Pancreas (tissue), 10 donors: ENCODE measurements at regions of chr1 and their contacts with region 1.

Region 1: GRCh38 chr1:240031009-240031408 is 60.7 kb upstream of the FMN2 start:
- DNase-seq: no peak
- ATAC-seq: no peak
- H3K4me3 ChIP-seq: no peak overlapping the region
- H3K27ac ChIP-seq: no peak overlapping the region
- H3K4me1 ChIP-seq: no peaks in the 10 kb centered on the region
- H3K27me3 ChIP-seq: no peaks in the 10 kb centered on the region
- CTCF ChIP-seq: no peak

Region 2: DNA sequence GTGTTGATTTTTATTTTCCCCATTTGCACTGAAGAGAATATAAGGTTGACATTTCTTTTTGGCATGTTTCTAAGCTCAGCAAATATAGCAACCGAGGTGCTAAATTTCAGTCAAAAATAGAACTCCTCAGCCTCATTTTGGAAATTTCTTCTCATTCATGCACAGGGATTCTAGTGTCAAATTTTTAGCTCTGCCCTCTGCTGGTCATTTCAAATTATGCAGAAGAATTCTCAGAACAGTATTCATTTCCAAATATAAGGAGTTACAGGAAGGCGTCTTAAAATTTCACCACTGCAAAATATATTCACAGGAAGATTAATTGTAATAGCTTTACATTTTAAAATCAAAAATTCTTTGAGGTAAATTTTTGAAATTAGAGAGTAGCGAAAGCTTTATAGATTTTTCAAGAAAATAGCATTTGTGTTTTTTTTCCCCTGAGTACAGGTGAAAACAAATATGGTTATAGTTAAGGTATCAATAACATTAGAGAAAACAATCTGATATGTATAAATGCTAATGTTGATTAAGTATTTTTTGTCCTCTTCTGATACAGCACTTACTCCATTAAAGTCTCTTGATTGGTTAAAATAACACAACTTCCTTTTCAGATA is 118.6 kb after region 1 on chr1:
- intact Hi-C with region 1: loop called in 1 of 3 experiments (anchors 10 kb)
- DNase-seq: no peak
- ATAC-seq: peak in 3 of 4 donors; percentile 39 to 70 (median 66)
- H3K4me3 ChIP-seq: no peak overlapping the region
- H3K27ac ChIP-seq: no peak overlapping the region
- H3K4me1 ChIP-seq: no peaks in the 10 kb centered on the region
- H3K27me3 ChIP-seq: no peaks in the 10 kb centered on the region
- CTCF ChIP-seq: peak; percentile 27 to 53 (median 51)